ENCODE measurements at regions of chr5 and their contacts with region 1.

Region 1: GRCh38 chr5:74640450-74640953 is at the start of gene ENC1:
- DNase-seq: peak; percentile 80 to 90
- H3K4me3 ChIP-seq: peak within 1 kb of the TSS; percentile 84
- H3K27ac ChIP-seq: peak within 1 kb of the TSS; percentile 98
- H3K4me1 ChIP-seq: peaks cover 54% of the 10 kb centered on the region
- H3K27me3 ChIP-seq: no peaks in the 10 kb centered on the region
- CTCF ChIP-seq: no peak; the same call in 1 of the 2 replicates
- total RNA-seq, gene ENC1: 38.8 and 53.6 TPM in 2 replicates

Region 2: GRCh38 chr5:73938280-73938937 is 702.1 kb before region 1 on chr5:
- CTCF ChIA-PET with region 1: interaction called, 4 read pairs
- POLR2A ChIA-PET with region 1: interaction called, 12 read pairs
- intact Hi-C with region 1: loop called (anchors 2 kb)
- DNase-seq: peak; percentile 77 to 98
- H3K4me3 ChIP-seq: peak overlapping the region; percentile 28; the same call in 1 of the 2 replicates
- H3K27ac ChIP-seq: peak overlapping the region; percentile 98
- H3K4me1 ChIP-seq: peaks cover 33% of the 10 kb centered on the region
- H3K27me3 ChIP-seq: no peaks in the 10 kb centered on the region
- CTCF ChIP-seq: no peak

Region 3: DNA sequence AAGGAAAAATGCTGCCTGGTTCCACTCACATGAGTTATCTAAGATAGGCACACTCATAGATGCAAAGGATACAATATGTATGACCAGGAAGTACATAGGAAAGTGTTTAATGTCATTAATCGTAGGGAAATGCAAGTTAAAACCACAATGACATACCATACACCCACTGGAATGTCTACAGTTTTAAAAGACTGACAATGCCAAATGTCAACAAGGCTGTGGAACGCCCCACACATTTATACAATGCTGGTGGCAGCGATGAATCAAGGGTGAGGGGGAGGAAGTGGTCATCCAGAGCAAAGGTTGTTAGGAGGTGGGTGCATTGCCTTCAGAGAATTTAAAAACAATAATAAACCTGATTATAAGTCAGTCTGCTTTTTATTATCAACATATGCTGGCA is 576.7 kb before region 1 on chr5:
- CTCF ChIA-PET with region 1: no interaction called
- POLR2A ChIA-PET with region 1: no interaction called
- intact Hi-C with region 1: loop called (anchors 5 kb)
- DNase-seq: peak; percentile 70 to 98
- H3K4me3 ChIP-seq: no peak overlapping the region
- H3K27ac ChIP-seq: peak overlapping the region; percentile 79
- H3K4me1 ChIP-seq: peaks cover 52% of the 10 kb centered on the region
- H3K27me3 ChIP-seq: no peaks in the 10 kb centered on the region
- CTCF ChIP-seq: no peak

Region 4: DNA sequence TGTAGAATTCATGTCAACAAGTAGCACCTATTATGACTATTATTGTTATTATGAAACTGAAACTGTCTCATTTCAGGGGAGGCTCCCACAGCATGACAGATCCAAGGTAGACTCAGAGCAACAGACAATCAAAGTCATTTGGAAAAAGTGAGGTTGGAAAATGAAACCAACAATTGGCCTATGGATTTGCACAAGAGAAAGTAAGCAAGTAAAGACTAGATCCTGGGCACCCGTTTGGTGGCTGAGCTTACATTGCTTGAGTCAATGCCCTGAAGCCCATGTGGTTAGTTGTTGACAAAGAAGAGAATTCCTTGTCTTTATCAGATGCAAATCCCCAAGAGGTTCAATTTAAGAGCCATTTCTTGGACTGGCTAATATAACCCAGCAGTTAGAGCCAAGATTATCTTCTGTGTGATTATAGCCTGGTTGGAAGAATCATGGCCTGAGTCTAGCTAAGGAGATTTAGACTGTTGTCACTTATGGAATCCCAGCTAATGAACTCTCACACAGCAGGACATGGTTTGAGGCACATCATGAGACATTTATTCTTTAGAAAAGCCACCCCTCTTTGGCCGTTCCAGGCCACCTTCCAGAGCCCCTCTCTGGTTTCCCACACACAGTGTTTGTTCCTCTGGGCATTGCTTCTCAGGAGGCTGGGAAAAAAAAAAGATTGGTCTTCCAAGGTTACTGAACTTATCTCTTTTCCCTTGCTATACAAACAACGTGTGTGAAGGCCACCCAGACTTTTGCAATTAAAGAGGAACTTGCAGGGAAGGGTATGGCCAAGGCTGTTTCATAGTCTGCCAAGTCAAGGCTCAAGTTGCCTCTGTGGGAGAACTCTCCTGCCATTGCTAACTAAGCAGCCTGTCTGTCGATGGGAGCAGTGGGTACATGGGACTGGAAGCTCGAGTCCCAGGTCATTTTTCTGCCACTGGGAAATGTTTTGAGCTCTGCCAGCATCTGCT is 399.4 kb before region 1 on chr5:
- CTCF ChIA-PET with region 1: no interaction called
- POLR2A ChIA-PET with region 1: no interaction called
- intact Hi-C with region 1: loop called (anchors 1 kb)
- DNase-seq: peak; percentile 50 to 96
- H3K4me3 ChIP-seq: peak overlapping the region; percentile 38; the same call in 1 of the 2 replicates
- H3K27ac ChIP-seq: peak overlapping the region; percentile 100
- H3K4me1 ChIP-seq: peaks cover 60% of the 10 kb centered on the region
- H3K27me3 ChIP-seq: no peaks in the 10 kb centered on the region
- CTCF ChIP-seq: 0 out of 2 replicates have a peak, but pooled peaks have one; percentile 11

Region 5: GRCh38 chr5:74394916-74395781 is 245.4 kb before region 1 on chr5:
- CTCF ChIA-PET with region 1: no interaction called
- POLR2A ChIA-PET with region 1: interaction called, 7 read pairs
- intact Hi-C with region 1: loop called (anchors 1 kb)
- DNase-seq: peak; percentile 91 to 99
- H3K4me3 ChIP-seq: no peak overlapping the region; the same call in 1 of the 2 replicates
- H3K27ac ChIP-seq: peak overlapping the region; percentile 82
- H3K4me1 ChIP-seq: peaks cover 42% of the 10 kb centered on the region
- H3K27me3 ChIP-seq: no peaks in the 10 kb centered on the region
- CTCF ChIP-seq: peak; percentile 61

Region 6: DNA sequence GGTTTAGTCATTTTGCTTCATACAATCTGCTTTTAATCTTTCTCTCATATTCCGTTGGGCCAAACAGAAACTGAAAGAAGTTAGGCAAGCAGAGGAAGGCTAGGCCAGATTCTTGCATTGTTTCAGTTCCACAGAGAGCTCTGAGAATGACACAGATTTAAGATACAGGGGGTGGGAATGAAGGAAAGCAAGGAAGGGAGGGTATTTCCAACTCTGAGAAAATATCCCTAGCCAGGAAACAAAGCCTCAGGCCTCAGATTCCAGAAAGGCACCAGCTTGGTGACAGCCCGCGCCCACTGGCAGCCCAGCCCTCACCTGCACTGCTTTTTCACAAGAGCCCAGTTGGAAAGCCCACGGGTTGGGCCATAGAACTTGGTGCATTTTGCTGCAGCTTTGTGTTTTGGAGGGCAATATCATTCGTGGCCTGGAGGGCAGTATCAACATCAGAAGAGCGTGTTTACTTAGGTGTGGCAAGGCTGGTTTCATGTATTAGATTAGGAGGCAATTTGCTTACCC is 63.5 kb before region 1 on chr5:
- CTCF ChIA-PET with region 1: no interaction called
- POLR2A ChIA-PET with region 1: interaction called, 3 read pairs
- intact Hi-C with region 1: loop called (anchors 2 kb)
- DNase-seq: peak; percentile 53 to 68
- H3K4me3 ChIP-seq: no peak overlapping the region
- H3K27ac ChIP-seq: peak overlapping the region; percentile 82
- H3K4me1 ChIP-seq: peaks cover 31% of the 10 kb centered on the region
- H3K27me3 ChIP-seq: no peaks in the 10 kb centered on the region
- CTCF ChIP-seq: no peak

Measured in PC-9 (cell line).